Adrenal gland (tissue), 19 donors: ENCODE measurements at regions of chr16 and their contacts with region 1.

Region 1: DNA sequence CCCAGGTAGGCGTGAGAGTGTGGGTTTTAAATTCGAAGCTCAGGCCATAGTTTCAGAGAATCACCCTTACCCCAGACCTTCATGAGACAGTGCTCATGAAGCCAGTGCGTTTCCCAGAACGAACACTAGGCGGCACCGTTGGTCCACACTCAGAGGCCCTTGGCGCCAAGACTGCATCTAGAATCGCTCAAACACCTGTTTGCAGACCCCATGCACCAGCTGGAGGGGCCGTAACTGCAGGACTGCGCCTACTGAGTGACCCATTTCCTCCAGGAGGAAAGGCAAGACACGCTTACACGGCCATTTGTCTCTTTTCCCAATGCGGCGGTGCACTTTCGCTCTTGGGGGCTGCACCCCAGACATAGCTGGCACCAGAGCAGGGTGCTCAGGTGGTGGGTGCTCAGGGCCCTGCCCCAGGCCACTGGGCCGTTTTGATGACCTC is 34.0 kb downstream of the ADGRG5 start:
- DNase-seq: peak; percentile 55 to 93 (median 81)
- H3K4me3 ChIP-seq: no peak overlapping the region
- H3K27ac ChIP-seq: no peak overlapping the region
- H3K4me1 ChIP-seq: no peaks in the 10 kb centered on the region
- H3K27me3 ChIP-seq: peaks cover 6% of the 10 kb centered on the region
- CTCF ChIP-seq: peak; percentile 88 to 96 (median 93)
- POLR2A ChIP-seq: no peak

Region 2: DNA sequence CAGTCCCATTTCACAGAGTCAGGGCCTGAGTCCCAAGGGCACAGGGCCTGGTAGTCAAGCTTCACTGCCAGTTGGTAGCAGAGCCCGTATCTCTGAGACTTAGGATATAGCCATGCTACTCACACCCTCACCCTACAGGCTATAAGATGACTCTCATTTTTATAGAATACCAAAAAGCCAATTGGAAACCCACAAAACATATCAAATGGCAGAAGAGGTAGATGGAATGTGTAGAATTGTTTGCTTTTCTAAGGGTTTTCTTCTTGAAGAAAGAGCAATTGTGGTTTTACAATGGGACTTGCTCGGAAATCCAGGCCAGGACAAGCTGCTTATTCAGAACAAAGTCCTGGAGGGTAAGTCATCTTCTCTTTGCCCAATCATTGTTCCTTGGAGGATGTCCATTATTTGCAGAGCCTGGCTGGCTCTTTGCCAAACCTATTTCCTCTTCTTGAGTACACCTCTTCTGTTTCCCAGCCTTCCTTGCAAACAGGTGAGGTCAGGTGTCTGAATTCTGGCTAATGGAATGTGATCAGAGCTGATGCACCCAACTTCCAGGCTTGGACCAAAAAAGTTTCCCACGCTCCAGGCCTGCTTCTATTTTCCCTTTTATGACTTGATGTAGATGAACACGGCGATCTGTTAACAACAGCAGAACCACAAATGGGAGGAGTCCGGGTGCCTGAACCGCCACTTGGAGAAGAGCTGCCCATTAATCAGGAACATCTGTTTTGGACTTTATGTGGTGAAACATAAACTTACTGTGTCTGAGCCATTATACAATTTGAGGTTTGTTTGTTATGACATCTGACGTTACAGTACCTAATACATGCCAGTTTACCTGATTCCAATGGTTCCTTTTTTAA is 234.8 kb before region 1 on chr16:
- intact Hi-C with region 1: no loop called
- DNase-seq: peak in 1 of 7 donors; percentile 39
- H3K4me3 ChIP-seq: no peak overlapping the region
- H3K27ac ChIP-seq: no peak overlapping the region
- H3K4me1 ChIP-seq: no peaks in the 10 kb centered on the region
- H3K27me3 ChIP-seq: peaks cover 2% of the 10 kb centered on the region
- CTCF ChIP-seq: no peak
- POLR2A ChIP-seq: no peak

Region 3: GRCh38 chr16:57475711-57476339 is 100.6 kb before region 1 on chr16:
- intact Hi-C with region 1: no loop called
- DNase-seq: peak in 4 of 7 donors; percentile 30 to 74 (median 50)
- H3K4me3 ChIP-seq: no peak overlapping the region
- H3K27ac ChIP-seq: peak overlapping the region in 1 of 5 donors; percentile 20
- H3K4me1 ChIP-seq: peaks cover 6 to 33% of the 10 kb centered on the region in 2 donors
- H3K27me3 ChIP-seq: no peaks in the 10 kb centered on the region
- CTCF ChIP-seq: peak in 5 of 6 experiments; percentile 16 to 54 (median 34)
- POLR2A ChIP-seq: no peak

Region 4: DNA sequence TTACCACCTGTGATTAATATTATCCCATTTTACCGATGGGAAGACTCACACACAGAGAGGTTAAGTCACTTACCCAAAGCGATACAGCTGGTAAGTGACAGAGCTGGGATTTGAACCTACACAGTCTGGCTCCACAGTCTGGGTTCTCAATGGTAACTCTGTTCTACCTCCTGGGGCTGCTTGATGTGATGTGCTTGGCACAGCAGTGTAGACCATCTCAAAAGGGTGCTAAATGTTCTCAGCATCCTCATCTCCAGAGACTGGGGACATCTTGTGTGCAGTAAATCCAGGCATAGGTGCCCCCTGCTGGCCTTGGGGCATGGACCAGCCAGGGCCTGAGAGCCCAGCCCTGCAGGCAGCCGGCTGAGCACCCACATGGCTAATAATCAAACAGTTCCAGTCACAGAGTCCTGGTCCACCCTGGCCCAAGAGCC is 143.7 kb after region 1 on chr16:
- intact Hi-C with region 1: loop called (anchors 10 kb)
- DNase-seq: peak in 6 of 7 donors; percentile 46 to 80 (median 67)
- H3K4me3 ChIP-seq: no peak overlapping the region
- H3K27ac ChIP-seq: no peak overlapping the region
- H3K4me1 ChIP-seq: no peaks in the 10 kb centered on the region
- H3K27me3 ChIP-seq: no peaks in the 10 kb centered on the region
- CTCF ChIP-seq: peak; percentile 26 to 65 (median 56)
- POLR2A ChIP-seq: no peak